Aorta (tissue), 5 donors: ENCODE measurements at regions of chr5 and their contacts with region 1.

Region 1: DNA sequence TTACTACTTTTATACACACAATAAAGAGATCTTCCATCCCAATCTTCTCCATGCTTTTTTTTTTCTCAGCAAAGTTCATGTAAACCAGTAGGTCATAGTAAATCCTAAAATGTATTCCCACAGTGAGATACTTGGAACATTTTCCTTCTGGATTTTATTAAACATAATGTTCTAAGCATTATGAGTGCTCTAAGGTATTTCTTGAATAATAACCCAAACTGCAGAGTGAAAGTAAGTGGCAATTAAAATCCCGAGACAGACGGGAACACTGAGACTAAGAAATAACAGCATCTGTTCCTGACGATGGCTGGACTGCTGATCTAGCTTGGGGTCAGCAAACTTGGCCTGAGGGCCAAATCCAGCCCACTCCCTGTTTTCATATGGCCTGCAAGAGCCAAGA is 359.8 kb downstream of the ARL15 start:
- DNase-seq: no peak
- ATAC-seq: no peak
- H3K4me3 ChIP-seq: no peak overlapping the region
- H3K27ac ChIP-seq: no peak overlapping the region
- H3K4me1 ChIP-seq: no peaks in the 10 kb centered on the region
- H3K27me3 ChIP-seq: no peaks in the 10 kb centered on the region

Region 2: DNA sequence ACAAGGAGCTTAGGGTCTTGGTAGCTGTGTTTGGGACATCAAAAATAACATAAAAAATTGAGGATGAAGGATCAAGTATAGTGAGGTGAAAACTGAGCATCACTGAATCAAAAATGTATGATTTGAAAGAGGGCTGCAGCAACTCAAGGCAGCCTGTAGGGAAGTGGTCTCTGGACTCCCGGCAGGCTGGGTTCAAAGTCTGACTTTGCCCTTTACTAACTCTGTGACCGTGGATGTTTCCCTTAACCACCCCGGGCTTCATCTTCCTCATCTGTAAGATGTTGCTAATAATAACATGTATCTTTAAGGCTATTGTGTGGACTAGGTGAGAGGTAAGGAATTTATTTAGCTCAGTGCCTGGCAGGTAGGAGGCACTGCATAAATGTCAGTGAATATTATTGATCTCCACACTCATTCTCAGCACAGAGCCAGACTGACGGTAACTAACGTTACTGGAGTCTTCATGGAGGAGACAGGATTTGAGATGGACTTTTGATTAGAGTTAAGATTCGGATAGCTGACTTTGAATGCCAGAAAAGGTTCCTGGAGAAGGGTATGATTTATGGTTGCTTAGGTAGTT is 22.9 kb before region 1 on chr5:
- intact Hi-C with region 1: loop called in 1 of 2 experiments (anchors 2 kb)
- DNase-seq: no peak
- ATAC-seq: no peak
- H3K4me3 ChIP-seq: no peak overlapping the region
- H3K27ac ChIP-seq: no peak overlapping the region
- H3K4me1 ChIP-seq: no peaks in the 10 kb centered on the region
- H3K27me3 ChIP-seq: no peaks in the 10 kb centered on the region

Region 3: DNA sequence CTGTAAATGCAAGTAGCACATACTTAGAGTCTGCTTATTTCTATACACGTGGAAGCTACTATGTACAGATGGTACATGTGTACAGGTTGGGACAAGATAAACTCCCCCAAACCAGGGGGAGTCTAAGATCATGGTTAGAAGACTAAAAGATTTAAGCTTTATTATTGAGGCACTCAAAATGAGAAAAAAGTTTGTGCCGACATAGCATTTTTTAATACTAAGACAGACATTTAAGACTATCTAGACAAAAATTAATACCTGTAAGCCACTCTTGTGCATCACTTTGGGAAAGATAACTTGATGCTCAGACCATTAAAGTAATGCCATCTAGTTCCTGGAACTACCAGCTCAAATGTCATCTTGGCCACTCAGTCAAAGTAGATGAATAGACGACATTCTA is 80.4 kb after region 1 on chr5:
- intact Hi-C with region 1: no loop called
- DNase-seq: no peak
- ATAC-seq: no peak
- H3K4me3 ChIP-seq: no peak overlapping the region
- H3K27ac ChIP-seq: no peak overlapping the region
- H3K4me1 ChIP-seq: no peaks in the 10 kb centered on the region
- H3K27me3 ChIP-seq: no peaks in the 10 kb centered on the region